Activated B cell treated with CpG ODN at 0.5 μM for 24 hours (primary cell): ENCODE measurements at regions of chr14 and their contacts with region 1.

Region 1: GRCh38 chr14:69611201-69612011 is at the start of gene SUSD6:
- DNase-seq: peak; percentile 87
- ATAC-seq: peak; percentile 68
- H3K4me3 Mint-ChIP-seq: peak within 1 kb of the TSS; percentile 97
- H3K27ac Mint-ChIP-seq: peak within 1 kb of the TSS; percentile 99
- H3K4me1 Mint-ChIP-seq: peaks cover 54% of the 10 kb centered on the region
- H3K27me3 Mint-ChIP-seq: no peaks in the 10 kb centered on the region
- CTCF ChIP-seq: no peak
- total RNA-seq, gene SUSD6: 63.5 and 67.1 TPM in 2 replicates

Region 2: GRCh38 chr14:69625299-69626131 is 14.1 kb after region 1 on chr14:
- CTCF ChIA-PET with region 1: interaction called, 4 read pairs
- POLR2A ChIA-PET with region 1: interaction called, 20 read pairs
- intact Hi-C with region 1: loop called (anchors 1 kb)
- DNase-seq: no peak
- ATAC-seq: peak; percentile 88
- H3K4me3 Mint-ChIP-seq: peak overlapping the region; percentile 74
- H3K27ac Mint-ChIP-seq: peak overlapping the region; percentile 83
- H3K4me1 Mint-ChIP-seq: peaks cover 93% of the 10 kb centered on the region
- H3K27me3 Mint-ChIP-seq: no peaks in the 10 kb centered on the region
- CTCF ChIP-seq: no peak

Region 3: GRCh38 chr14:69652942-69653684 is 41.7 kb after region 1 on chr14:
- CTCF ChIA-PET with region 1: interaction called, 3 read pairs
- POLR2A ChIA-PET with region 1: interaction called, 25 read pairs
- intact Hi-C with region 1: no loop called
- DNase-seq: no peak
- ATAC-seq: peak; percentile 74
- H3K4me3 Mint-ChIP-seq: peak overlapping the region; percentile 61
- H3K27ac Mint-ChIP-seq: peak overlapping the region; percentile 88
- H3K4me1 Mint-ChIP-seq: peaks cover 95% of the 10 kb centered on the region
- H3K27me3 Mint-ChIP-seq: no peaks in the 10 kb centered on the region
- CTCF ChIP-seq: no peak

Region 4: DNA sequence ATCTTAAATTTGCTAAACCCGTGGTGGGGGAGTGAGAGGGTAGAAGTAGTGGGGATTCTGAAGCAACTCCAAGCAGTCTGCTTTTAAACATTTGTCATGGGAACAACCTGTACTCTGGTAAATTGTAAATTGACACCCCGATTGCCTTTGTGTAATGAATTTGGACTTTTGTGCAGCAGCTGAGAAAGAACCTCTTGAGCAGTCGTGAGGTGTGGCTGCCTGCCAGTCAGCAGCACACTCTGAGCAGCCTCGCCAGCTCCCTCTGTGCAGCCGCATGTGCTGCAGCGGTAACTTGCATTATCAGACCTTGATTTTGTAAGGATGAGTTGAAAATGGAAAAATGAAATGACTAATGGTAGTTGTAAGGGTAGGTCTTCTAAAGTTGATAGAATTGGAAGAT is 74.3 kb after region 1 on chr14:
- CTCF ChIA-PET with region 1: no interaction called
- POLR2A ChIA-PET with region 1: interaction called, 8 read pairs
- intact Hi-C with region 1: loop called (anchors 2 kb)
- DNase-seq: no peak
- ATAC-seq: no peak
- H3K4me3 Mint-ChIP-seq: peak overlapping the region; percentile 6
- H3K27ac Mint-ChIP-seq: peak overlapping the region; percentile 81
- H3K4me1 Mint-ChIP-seq: peaks cover 80% of the 10 kb centered on the region
- H3K27me3 Mint-ChIP-seq: no peaks in the 10 kb centered on the region
- CTCF ChIP-seq: no peak

Region 5: DNA sequence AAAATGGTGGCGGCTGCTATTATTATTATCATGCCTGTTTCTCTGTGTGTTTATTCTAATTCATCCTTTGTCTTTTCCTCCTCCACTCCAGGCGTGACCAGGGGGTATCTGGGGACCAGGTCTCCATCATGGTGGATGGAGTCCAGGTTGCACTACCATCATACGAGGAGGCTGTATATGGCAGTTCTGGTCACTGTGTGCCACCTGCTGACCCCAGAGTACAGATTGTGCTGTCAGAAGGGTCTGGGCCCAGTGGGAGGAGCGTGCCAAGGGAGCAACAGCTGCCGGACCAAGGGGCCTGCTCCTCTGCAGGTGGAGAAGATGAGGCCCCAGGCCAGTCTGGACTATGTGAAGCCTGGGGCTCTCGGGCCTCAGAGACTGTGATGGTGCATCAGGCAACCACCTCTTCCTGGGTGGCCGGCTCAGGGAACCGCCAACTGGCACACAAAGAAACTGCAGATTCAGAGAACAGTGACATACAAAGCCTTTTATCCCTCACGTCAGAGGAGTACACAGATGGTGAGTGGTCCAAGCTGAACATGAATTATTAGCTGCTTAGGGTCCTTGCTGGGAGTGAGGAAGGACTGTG is 97.3 kb after region 1 on chr14:
- CTCF ChIA-PET with region 1: interaction called, 5 read pairs
- POLR2A ChIA-PET with region 1: interaction called, 11 read pairs
- intact Hi-C with region 1: loop called (anchors 1 kb)
- DNase-seq: no peak
- ATAC-seq: peak; percentile 66
- H3K4me3 Mint-ChIP-seq: no peak overlapping the region
- H3K27ac Mint-ChIP-seq: peak overlapping the region; percentile 63
- H3K4me1 Mint-ChIP-seq: peaks cover 55% of the 10 kb centered on the region
- H3K27me3 Mint-ChIP-seq: no peaks in the 10 kb centered on the region
- CTCF ChIP-seq: no peak

Region 6: GRCh38 chr14:70655110-70655826 is 1043.9 kb after region 1 on chr14:
- CTCF ChIA-PET with region 1: no interaction called
- POLR2A ChIA-PET with region 1: interaction called, 3 read pairs
- intact Hi-C with region 1: loop called (anchors 10 kb)
- DNase-seq: peak; percentile 48
- ATAC-seq: peak; percentile 79
- H3K4me3 Mint-ChIP-seq: peak overlapping the region; percentile 80
- H3K27ac Mint-ChIP-seq: peak overlapping the region; percentile 98
- H3K4me1 Mint-ChIP-seq: peaks cover 83% of the 10 kb centered on the region
- H3K27me3 Mint-ChIP-seq: no peaks in the 10 kb centered on the region
- CTCF ChIP-seq: no peak